ENCODE measurements at regions of chr17 and their contacts with region 1.

Region 1: GRCh38 chr17:31318298-31318801 is 3.1 kb downstream of the EVI2A start:
- DNase-seq: peak; percentile 86
- H3K4me3 ChIP-seq: peak overlapping the region in 2 of 3 experiments; percentile 46 to 52
- H3K27ac ChIP-seq: peak overlapping the region; percentile 87
- H3K4me1 ChIP-seq: peaks cover 43% of the 10 kb centered on the region
- H3K27me3 ChIP-seq: no peaks in the 10 kb centered on the region
- CTCF ChIP-seq: no peak

Region 2: DNA sequence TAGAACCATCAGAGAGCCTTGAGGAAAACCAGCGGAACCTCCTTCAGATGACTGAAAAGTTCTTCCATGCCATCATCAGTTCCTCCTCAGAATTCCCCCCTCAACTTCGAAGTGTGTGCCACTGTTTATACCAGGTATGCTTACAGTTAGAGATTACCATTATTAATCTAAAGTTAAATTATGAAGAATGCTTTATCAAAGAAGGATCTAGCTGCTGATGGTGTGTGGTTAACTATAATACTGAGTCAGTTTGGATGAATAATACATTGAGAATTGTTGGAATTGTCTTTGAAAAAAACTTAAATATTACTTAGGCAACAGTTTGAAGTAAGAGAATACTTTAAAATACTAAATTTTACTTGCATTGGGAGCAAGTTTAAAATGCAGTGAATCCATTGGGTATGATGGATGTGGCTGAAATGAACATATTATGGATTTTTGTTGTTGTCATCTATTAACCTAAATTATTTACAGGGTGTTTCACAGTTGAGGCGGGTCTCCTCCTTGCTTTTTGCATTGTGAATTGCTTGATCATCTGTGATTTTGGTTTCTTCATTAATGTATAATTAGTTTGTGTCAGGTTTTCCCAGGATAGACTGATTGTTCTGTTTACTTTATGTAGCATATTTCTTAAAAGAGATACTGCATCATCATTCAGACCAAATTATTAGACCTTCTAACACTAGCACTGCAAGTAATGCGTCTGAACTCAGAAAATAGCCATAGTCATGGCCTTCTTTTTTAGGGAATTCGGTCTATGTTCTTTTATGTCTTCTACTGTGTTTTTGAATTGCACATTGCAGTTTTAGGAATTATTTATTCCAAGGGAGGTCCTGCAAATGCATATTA is 69.1 kb before region 1 on chr17:
- CTCF ChIA-PET with region 1: no interaction called
- dilution Hi-C with region 1: loop called (anchors 5 kb)
- in situ Hi-C with region 1: no loop called
- intact Hi-C with region 1: no loop called
- DNase-seq: peak; percentile 66
- H3K4me3 ChIP-seq: no peak overlapping the region
- H3K27ac ChIP-seq: peak overlapping the region; percentile 53
- H3K4me1 ChIP-seq: peaks cover 31% of the 10 kb centered on the region
- H3K27me3 ChIP-seq: no peaks in the 10 kb centered on the region
- CTCF ChIP-seq: no peak